ENCODE measurements at regions of chr17 and their contacts with region 1.

Region 1: DNA sequence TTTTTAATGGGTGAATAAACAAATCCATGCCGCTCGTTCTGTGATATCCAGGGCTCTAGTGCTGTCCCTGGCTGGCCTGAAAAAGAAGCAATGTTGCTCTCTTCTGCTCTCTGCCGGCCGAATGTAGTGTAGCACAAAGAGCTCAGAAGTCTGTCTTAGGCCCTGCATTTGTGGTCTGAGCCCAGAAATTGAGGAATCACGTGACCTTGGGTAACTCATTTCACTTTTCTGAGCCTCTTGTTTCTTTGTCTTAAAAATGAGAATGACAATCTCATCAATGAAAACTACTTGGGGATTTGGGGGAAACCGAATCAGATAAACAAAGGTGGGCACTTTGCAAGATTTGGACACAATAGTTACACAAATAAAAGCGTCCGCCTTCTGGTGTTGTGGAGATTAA is 381.6 kb upstream of the ASIC2 start:
- DNase-seq: peak; percentile 29 to 50
- ATAC-seq: peak; percentile 71

Region 2: DNA sequence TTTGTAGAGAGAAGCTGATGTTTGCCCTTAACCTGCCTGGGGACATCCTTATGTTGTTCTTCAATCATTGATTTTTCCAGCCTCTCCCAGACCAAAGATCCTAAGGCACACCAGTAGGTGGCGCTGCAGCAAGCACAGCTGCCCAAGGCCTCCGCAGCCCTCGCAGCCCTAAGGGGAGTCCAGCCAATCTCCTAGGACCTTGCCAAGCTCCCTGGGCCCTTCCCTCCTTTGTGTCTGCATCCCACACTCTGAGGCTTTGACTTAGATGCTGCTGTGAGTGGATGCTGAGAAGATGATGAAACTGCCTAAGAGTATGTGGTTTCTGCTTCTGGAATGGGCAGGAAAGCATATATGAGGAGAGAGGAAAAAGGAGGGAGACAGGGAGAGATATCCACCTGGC is 635.9 kb before region 1 on chr17:
- intact Hi-C with region 1: loop called in 1 of 2 experiments (anchors 10 kb)
- DNase-seq: peak in 1 of 2 donors; percentile 65
- ATAC-seq: peak; percentile 91

Region 3: GRCh38 chr17:33732116-33732515 is 57.4 kb after region 1 on chr17:
- intact Hi-C with region 1: loop called in 1 of 2 experiments (anchors 10 kb)
- DNase-seq: no peak
- ATAC-seq: no peak

Region 4: GRCh38 chr17:33927732-33928133 is 253.0 kb after region 1 on chr17:
- intact Hi-C with region 1: no loop called
- DNase-seq: no peak
- ATAC-seq: no peak

Measured in left colon (tissue), 2 donors.